Activated CD4-positive, alpha-beta T cell treated with anti-CD3 and anti-CD28 coated beads for 36 hours (primary cell): ENCODE measurements at regions of chr2 and their contacts with region 1.

Region 1: GRCh38 chr2:134261398-134262131 is 7.7 kb downstream of the MGAT5 start:
- DNase-seq: peak; percentile 34
- ATAC-seq: peak; percentile 70
- H3K4me3 Mint-ChIP-seq: no peak overlapping the region
- H3K27ac Mint-ChIP-seq: no peak overlapping the region
- H3K4me1 Mint-ChIP-seq: peaks cover 67% of the 10 kb centered on the region
- H3K27me3 Mint-ChIP-seq: no peaks in the 10 kb centered on the region

Region 2: GRCh38 chr2:133541376-133541775 is 720.2 kb before region 1 on chr2:
- CTCF ChIA-PET with region 1: no interaction called
- POLR2A ChIA-PET with region 1: no interaction called
- intact Hi-C with region 1: no loop called
- DNase-seq: no peak
- ATAC-seq: no peak
- H3K4me3 Mint-ChIP-seq: no peak overlapping the region
- H3K27ac Mint-ChIP-seq: no peak overlapping the region
- H3K4me1 Mint-ChIP-seq: no peaks in the 10 kb centered on the region
- H3K27me3 Mint-ChIP-seq: no peaks in the 10 kb centered on the region

Region 3: GRCh38 chr2:134282629-134283400 is 21.2 kb after region 1 on chr2:
- CTCF ChIA-PET with region 1: interaction called, 5 read pairs
- POLR2A ChIA-PET with region 1: interaction called, 4 read pairs
- intact Hi-C with region 1: loop called in 1 of 2 experiments (anchors 2 kb)
- DNase-seq: peak; percentile 70
- ATAC-seq: peak; percentile 91
- H3K4me3 Mint-ChIP-seq: no peak overlapping the region
- H3K27ac Mint-ChIP-seq: peak overlapping the region; percentile 66
- H3K4me1 Mint-ChIP-seq: peaks cover 51% of the 10 kb centered on the region
- H3K27me3 Mint-ChIP-seq: no peaks in the 10 kb centered on the region